ENCODE measurements at regions of chr1 and their contacts with region 1.

Region 1: GRCh38 chr1:184531296-184531695 is 144.5 kb downstream of the C1orf21 start:
- DNase-seq: peak; percentile 27
- ATAC-seq: 0 out of 2 replicates have a peak, but pooled peaks have one; percentile 27
- H3K4me3 ChIP-seq: no peak overlapping the region
- H3K27ac ChIP-seq: no peak overlapping the region
- H3K4me1 ChIP-seq: no peaks in the 10 kb centered on the region
- H3K27me3 ChIP-seq: no peaks in the 10 kb centered on the region
- CTCF ChIP-seq: no peak
- POLR2A ChIP-seq: no peak
- RAD21 ChIP-seq: no peak

Region 2: GRCh38 chr1:183039985-183040447 is 1491.3 kb before region 1 on chr1:
- CTCF ChIA-PET with region 1: no interaction called
- POLR2A ChIA-PET with region 1: interaction called, 11 read pairs
- dilution Hi-C with region 1: no loop called
- in situ Hi-C with region 1: no loop called
- intact Hi-C with region 1: no loop called
- DNase-seq: peak; percentile 88
- ATAC-seq: peak; percentile 50
- H3K4me3 ChIP-seq: no peak overlapping the region
- H3K27ac ChIP-seq: no peak overlapping the region
- H3K4me1 ChIP-seq: peaks cover 26% of the 10 kb centered on the region
- H3K27me3 ChIP-seq: no peaks in the 10 kb centered on the region
- CTCF ChIP-seq: no peak
- POLR2A ChIP-seq: no peak
- RAD21 ChIP-seq: 0 out of 2 replicates have a peak, but pooled peaks have one; percentile 13

Region 3: DNA sequence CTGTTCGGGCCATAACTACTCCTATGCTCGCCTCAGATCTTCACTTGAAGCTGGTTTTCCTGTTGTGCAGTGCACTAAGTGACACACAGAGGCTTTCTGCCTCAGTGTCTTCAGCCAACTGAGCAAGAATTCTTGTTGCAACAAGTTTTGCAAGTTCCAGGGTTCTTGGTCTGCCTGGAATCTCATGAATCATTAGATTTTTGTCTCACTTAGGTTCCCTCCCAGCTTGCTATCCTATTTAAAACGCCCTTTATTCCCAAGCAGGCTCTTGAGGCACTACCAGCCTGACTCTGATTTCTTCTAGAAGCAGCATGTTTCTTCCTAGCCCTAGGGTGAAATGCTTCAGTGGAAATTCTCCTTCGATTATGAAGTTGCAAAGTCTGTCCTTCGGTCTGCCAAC is 14.3 kb after region 1 on chr1:
- CTCF ChIA-PET with region 1: interaction called, 3 read pairs
- POLR2A ChIA-PET with region 1: no interaction called
- dilution Hi-C with region 1: no loop called
- in situ Hi-C with region 1: no loop called
- intact Hi-C with region 1: loop called (anchors 1 kb)
- DNase-seq: peak; percentile 52
- ATAC-seq: peak; percentile 75
- H3K4me3 ChIP-seq: no peak overlapping the region
- H3K27ac ChIP-seq: no peak overlapping the region
- H3K4me1 ChIP-seq: no peaks in the 10 kb centered on the region
- H3K27me3 ChIP-seq: no peaks in the 10 kb centered on the region
- CTCF ChIP-seq: no peak
- POLR2A ChIP-seq: no peak
- RAD21 ChIP-seq: no peak

Region 4: GRCh38 chr1:184910691-184911091 is 379.4 kb after region 1 on chr1:
- CTCF ChIA-PET with region 1: no interaction called
- POLR2A ChIA-PET with region 1: no interaction called
- dilution Hi-C with region 1: no loop called
- in situ Hi-C with region 1: no loop called
- intact Hi-C with region 1: no loop called
- DNase-seq: peak; percentile 28
- ATAC-seq: peak; percentile 54
- H3K4me3 ChIP-seq: no peak overlapping the region
- H3K27ac ChIP-seq: peak overlapping the region; percentile 10; the same call in 1 of the 2 replicates
- H3K4me1 ChIP-seq: peaks cover 6% of the 10 kb centered on the region
- H3K27me3 ChIP-seq: no peaks in the 10 kb centered on the region
- CTCF ChIP-seq: no peak
- POLR2A ChIP-seq: no peak
- RAD21 ChIP-seq: no peak